HCT116 (cell line): ENCODE measurements at regions of chr12 and their contacts with region 1.

Region 1: GRCh38 chr12:40045656-40046055 is 60.2 kb downstream of the SLC2A13 start:
- DNase-seq: no peak
- ATAC-seq: no peak
- H3K4me3 ChIP-seq: no peak overlapping the region
- H3K27ac ChIP-seq: no peak overlapping the region
- H3K4me1 ChIP-seq: no peaks in the 10 kb centered on the region
- H3K27me3 ChIP-seq: no peaks in the 10 kb centered on the region
- CTCF ChIP-seq: no peak
- POLR2A ChIP-seq: no peak
- RAD21 ChIP-seq: no peak

Region 2: DNA sequence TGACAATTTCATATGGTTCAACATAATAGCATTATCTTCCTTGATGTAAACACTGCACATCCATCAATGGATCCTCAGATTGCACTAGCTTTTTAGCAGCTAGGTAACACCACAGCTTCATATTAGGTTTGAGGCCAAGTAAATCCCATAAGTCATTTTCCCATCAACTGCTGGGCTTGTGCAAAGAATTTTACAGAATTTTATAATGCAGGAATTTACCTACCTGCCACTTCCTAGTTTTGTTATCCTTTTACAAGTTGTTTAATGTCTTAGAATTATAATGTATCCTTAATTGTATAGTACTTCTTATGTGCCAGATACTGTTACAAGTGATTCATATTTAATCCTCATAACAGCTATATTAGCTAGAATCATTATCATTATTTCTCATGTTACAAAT is 1176.6 kb before region 1 on chr12:
- CTCF ChIA-PET with region 1: no interaction called
- POLR2A ChIA-PET with region 1: no interaction called
- RAD21 ChIA-PET with region 1: no interaction called
- intact Hi-C with region 1: loop called (anchors 10 kb)
- DNase-seq: no peak
- ATAC-seq: no peak
- H3K4me3 ChIP-seq: no peak overlapping the region
- H3K27ac ChIP-seq: no peak overlapping the region
- H3K4me1 ChIP-seq: no peaks in the 10 kb centered on the region
- H3K27me3 ChIP-seq: no peaks in the 10 kb centered on the region
- CTCF ChIP-seq: no peak
- POLR2A ChIP-seq: no peak
- RAD21 ChIP-seq: no peak

Region 3: DNA sequence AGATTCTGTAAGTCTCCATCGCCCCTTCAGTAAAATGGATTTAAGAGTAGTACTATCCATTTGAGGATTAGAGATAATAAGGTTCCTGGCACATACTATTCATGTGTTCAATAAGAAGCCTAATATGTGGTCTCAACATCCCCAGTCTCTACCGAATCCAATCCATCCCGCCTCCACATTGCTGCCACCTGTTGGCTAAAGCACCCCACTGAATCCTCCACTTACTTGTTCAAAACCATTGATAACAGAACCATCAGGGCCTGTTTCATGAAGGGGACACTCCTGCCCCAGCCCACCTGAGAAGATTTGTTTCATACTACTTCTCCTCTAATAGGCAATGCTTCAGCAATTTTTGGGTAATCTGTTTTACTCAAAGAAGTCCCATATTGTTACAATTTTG is 87.3 kb before region 1 on chr12:
- CTCF ChIA-PET with region 1: no interaction called
- POLR2A ChIA-PET with region 1: no interaction called
- RAD21 ChIA-PET with region 1: no interaction called
- intact Hi-C with region 1: no loop called
- DNase-seq: no peak
- ATAC-seq: no peak; the same call in 1 of the 2 replicates
- H3K4me3 ChIP-seq: no peak overlapping the region
- H3K27ac ChIP-seq: no peak overlapping the region
- H3K4me1 ChIP-seq: no peaks in the 10 kb centered on the region
- H3K27me3 ChIP-seq: no peaks in the 10 kb centered on the region
- CTCF ChIP-seq: peak; percentile 11 to 43 (median 42); a peak in 5 of 6 replicates
- POLR2A ChIP-seq: no peak
- RAD21 ChIP-seq: peak; percentile 27; the same call in 1 of the 2 replicates